ENCODE measurements at regions of chr11 and their contacts with region 1.

Region 1: DNA sequence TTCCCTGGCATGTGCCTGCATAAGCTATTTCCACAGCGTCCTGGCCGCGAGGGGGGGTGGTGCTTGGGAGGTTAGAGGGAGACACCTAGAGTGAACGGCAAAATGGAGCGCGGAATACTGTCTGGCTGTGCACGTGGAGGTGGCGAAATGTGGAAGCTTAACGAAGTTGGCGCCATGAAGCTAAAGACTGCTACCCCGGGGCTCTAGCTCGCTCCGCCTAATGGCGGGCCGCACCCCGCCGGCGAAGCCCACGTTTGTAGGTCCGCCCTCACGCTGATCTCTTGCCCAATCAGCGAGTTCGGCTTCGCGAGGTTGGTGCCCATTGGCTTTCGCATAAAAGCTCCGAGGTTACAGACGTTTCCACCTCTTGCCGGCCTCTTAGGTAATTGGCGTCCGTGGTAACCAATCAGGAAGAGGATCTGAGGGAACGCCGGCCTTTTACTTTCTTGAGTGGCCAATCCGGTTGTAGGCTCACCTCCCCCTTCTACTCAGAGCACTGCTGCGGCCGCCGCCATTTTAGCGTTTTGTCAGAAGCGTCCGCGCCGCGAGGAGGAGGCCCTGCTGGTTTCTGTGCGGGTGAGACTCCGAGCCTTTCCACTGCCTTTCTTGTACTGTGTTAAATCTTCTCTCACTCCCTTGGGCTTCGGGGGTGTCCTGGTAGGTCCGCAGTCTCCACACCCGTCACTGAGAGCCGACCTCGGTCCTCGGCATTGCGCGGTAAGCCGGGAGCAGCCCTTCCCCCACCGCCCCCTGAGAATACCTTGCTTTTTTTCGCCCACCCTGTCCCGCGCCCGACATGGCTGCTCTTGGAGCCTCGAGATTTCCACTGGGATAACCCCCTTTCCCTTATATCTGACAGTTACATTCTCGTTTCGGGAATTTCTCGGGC is at the start of gene RBM4:
- DNase-seq: peak; percentile 97
- ATAC-seq: peak; percentile 96
- H3K4me3 Mint-ChIP-seq: peak within 1 kb of the TSS; percentile 99
- H3K27ac Mint-ChIP-seq: peak within 1 kb of the TSS; percentile 99
- H3K4me1 Mint-ChIP-seq: peaks cover 60% of the 10 kb centered on the region
- H3K27me3 Mint-ChIP-seq: no peaks in the 10 kb centered on the region
- CTCF ChIP-seq: no peak
- total RNA-seq, gene RBM4: 144 to 163 TPM (median 154 TPM) in 3 replicates

Region 2: DNA sequence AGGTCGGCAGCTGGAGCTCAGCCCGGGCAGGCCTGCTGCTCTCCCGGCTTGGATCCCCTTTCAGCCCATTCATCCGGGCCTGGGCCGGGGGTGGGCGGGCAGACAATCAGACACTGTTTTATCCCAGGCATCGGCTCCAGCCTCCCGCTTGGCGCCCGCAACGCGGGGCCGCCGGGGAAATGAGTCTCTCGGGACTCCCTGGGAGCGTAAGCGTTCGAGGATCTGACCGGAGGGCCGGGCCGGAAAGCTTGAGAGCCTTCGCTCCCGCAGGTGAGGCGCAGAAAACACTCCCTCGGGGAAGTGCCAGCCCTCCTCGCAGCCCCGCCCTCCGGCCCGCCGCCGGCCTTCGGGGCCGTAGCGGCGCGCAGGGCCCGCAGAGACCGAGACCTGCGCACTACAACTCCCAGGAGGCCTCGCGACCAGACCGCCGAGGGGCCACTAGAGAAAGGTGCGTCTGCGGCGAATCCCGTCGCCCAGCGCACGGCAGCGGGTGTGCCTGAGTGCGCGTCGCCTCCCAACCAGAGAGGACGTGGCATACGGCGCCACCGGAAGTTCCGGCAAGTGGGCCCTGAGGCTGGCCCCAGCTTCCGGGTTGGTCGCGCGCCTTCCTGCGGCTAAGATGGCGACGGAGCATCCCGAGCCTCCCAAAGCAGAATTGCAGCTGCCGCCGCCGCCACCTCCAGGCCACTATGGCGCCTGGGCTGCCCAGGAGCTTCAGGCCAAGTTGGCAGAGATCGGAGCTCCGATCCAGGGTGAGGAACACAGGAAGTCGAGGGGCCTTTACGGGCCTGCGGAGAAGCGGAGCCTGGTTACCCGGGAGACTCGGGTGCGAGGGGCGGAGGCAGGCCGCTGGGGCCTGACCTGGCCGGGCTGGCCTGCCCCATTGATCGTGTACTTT is 586.4 kb before region 1 on chr11 and contains the start of gene SF3B2:
- CTCF ChIA-PET with region 1: no interaction called
- POLR2A ChIA-PET with region 1: no interaction called
- DNase-seq: peak; percentile 97
- ATAC-seq: peak; percentile 95
- H3K4me3 Mint-ChIP-seq: peak within 1 kb of the TSS; percentile 100
- H3K27ac Mint-ChIP-seq: peak within 1 kb of the TSS; percentile 98
- H3K4me1 Mint-ChIP-seq: peaks cover 35% of the 10 kb centered on the region
- H3K27me3 Mint-ChIP-seq: no peaks in the 10 kb centered on the region
- CTCF ChIP-seq: no peak
- total RNA-seq, gene SF3B2: 235 to 295 TPM (median 251 TPM) in 3 replicates

Region 3: GRCh38 chr11:66570117-66570819 is 68.2 kb before region 1 on chr11:
- CTCF ChIA-PET with region 1: no interaction called
- POLR2A ChIA-PET with region 1: no interaction called
- DNase-seq: no peak
- ATAC-seq: peak; percentile 70
- H3K4me3 Mint-ChIP-seq: no peak overlapping the region
- H3K27ac Mint-ChIP-seq: peak overlapping the region; percentile 94
- H3K4me1 Mint-ChIP-seq: peaks cover 21% of the 10 kb centered on the region
- H3K27me3 Mint-ChIP-seq: peaks cover 28% of the 10 kb centered on the region
- CTCF ChIP-seq: no peak

Region 4: DNA sequence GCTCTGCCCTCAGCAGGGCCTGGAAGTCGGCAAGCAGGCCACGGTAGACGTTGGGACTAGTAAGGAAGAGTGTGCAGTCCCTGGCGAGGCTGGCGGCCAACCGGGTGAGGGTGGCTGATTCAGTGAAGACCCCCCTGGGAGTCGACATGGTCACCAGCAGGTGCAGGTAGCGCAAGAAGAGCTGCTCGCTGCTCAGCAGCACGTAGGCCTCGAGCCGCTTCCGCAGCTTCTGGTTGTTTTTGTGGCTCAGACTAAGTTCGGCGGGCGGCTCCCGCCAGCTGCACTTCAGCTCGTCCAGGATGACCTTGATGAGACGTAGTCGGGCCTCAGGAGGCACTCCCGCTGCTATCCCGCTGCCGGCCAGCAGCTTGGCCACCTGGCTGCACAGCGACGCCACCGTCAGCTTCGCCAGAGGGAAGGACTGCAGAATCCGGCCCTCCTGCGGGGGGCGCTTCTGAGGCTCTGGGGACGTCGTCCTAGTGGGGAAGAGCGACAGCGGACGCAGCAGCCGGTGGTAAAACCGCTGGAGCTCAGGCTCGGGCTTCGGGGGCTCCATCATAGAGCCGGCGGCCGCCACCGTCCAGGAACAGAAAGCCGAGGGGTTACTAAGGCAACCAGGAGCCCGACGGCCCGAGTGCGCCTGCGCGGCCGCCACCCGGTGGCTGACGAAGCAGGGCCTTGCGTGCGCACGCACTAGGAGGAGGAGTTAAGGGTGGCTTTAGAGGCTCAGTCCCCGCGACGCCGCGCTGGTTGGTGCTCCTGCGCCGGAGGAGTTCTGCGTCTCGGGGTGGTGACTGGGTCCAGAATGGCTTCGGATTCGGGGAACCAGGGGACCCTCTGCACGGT is 45.7 kb before region 1 on chr11 and contains the starts of genes CCDC87 and CCS:
- CTCF ChIA-PET with region 1: interaction called, 23 read pairs
- POLR2A ChIA-PET with region 1: interaction called, 11 read pairs
- DNase-seq: peak; percentile 97
- ATAC-seq: peak; percentile 94
- H3K4me3 Mint-ChIP-seq: peak within 1 kb of the TSS; percentile 97
- H3K27ac Mint-ChIP-seq: peak within 1 kb of the TSS; percentile 99
- H3K4me1 Mint-ChIP-seq: peaks cover 11% of the 10 kb centered on the region
- H3K27me3 Mint-ChIP-seq: peaks cover 39% of the 10 kb centered on the region
- CTCF ChIP-seq: peak; percentile 32
- total RNA-seq, gene CCDC87: 0.71 to 0.85 TPM (median 0.80 TPM) in 3 replicates
- total RNA-seq, gene CCS: 35.9 to 47.3 TPM (median 41.7 TPM) in 3 replicates

Region 5: DNA sequence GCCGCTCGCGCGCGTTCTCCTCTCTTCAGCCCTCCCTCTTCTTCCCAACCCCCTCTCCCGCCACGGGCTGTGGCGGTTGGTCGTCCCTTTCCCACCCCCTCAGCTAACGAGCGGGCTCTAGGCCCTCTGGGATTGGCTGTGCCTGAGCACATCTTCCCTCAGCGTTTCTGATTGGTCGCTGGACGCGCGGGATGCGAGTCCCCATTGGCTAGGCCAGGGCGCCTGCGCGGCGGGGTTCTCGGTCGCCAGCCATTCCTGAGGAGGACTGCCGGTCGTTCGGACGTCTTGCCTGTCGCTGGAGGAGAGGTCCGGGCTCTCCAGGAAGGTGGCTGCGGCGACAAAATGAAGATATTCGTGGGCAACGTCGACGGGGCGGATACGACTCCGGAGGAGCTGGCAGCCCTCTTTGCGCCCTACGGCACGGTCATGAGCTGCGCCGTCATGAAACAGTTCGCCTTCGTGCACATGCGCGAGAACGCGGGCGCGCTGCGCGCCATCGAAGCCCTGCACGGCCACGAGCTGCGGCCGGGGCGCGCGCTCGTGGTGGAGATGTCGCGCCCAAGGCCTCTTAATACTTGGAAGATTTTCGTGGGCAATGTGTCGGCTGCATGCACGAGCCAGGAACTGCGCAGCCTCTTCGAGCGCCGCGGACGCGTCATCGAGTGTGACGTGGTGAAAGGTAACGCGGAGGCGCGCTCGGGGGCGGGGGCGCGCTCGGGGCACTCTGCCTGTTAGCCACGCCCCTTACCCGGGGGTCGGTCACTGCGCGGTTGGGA is 21.9 kb before region 1 on chr11 and contains the start of gene RBM14:
- CTCF ChIA-PET with region 1: interaction called, 5 read pairs
- POLR2A ChIA-PET with region 1: interaction called, 32 read pairs
- DNase-seq: peak; percentile 99
- ATAC-seq: peak; percentile 96
- H3K4me3 Mint-ChIP-seq: peak within 1 kb of the TSS; percentile 98
- H3K27ac Mint-ChIP-seq: peak within 1 kb of the TSS; percentile 99
- H3K4me1 Mint-ChIP-seq: peaks cover 33% of the 10 kb centered on the region
- H3K27me3 Mint-ChIP-seq: no peaks in the 10 kb centered on the region
- CTCF ChIP-seq: no peak
- total RNA-seq, gene RBM14: 92.0 to 146 TPM (median 137 TPM) in 3 replicates

Region 6: GRCh38 chr11:66625041-66625751 is 13.2 kb before region 1 on chr11:
- CTCF ChIA-PET with region 1: interaction called, 5 read pairs
- POLR2A ChIA-PET with region 1: interaction called, 14 read pairs
- DNase-seq: no peak
- ATAC-seq: no peak
- H3K4me3 Mint-ChIP-seq: no peak overlapping the region
- H3K27ac Mint-ChIP-seq: no peak overlapping the region
- H3K4me1 Mint-ChIP-seq: peaks cover 12% of the 10 kb centered on the region
- H3K27me3 Mint-ChIP-seq: no peaks in the 10 kb centered on the region
- CTCF ChIP-seq: no peak

Region 7: GRCh38 chr11:66651016-66651415 is 12.6 kb after region 1 on chr11:
- CTCF ChIA-PET with region 1: no interaction called
- POLR2A ChIA-PET with region 1: interaction called, 38 read pairs
- DNase-seq: no peak
- ATAC-seq: no peak
- H3K4me3 Mint-ChIP-seq: no peak overlapping the region
- H3K27ac Mint-ChIP-seq: peak overlapping the region; percentile 65; the same call in 1 of the 2 replicates
- H3K4me1 Mint-ChIP-seq: no peaks in the 10 kb centered on the region; the same call in 1 of the 2 replicates
- H3K27me3 Mint-ChIP-seq: no peaks in the 10 kb centered on the region
- CTCF ChIP-seq: no peak

Measured in WTC11 (cell line).